Left colon (tissue), 2 donors: ENCODE measurements at regions of chr12 and their contacts with region 1.

Region 1: GRCh38 chr12:56724972-56725722 is at the start of gene NACA:
- DNase-seq: peak; percentile 98 to 99
- ATAC-seq: peak; percentile 95
- total RNA-seq, gene NACA: 617 to 625 TPM

Region 2: GRCh38 chr12:55973598-55974307 is 751.4 kb before region 1 on chr12 and contains the start of gene RAB5B:
- intact Hi-C with region 1: no loop called
- DNase-seq: peak; percentile 97 to 100
- ATAC-seq: peak; percentile 84
- total RNA-seq, gene RAB5B: 149 to 169 TPM

Region 3: GRCh38 chr12:56645717-56646446 is 79.3 kb before region 1 on chr12 and contains the start of gene ATP5F1B:
- intact Hi-C with region 1: loop called in 1 of 2 experiments (anchors 10 kb)
- DNase-seq: peak; percentile 93 to 98
- ATAC-seq: peak; percentile 93
- total RNA-seq, gene ATP5F1B: 1,197 to 1,516 TPM

Region 4: GRCh38 chr12:56766535-56766934 is 41.4 kb after region 1 on chr12:
- intact Hi-C with region 1: no loop called
- DNase-seq: no peak
- ATAC-seq: no peak